Panc1 (cell line): ENCODE measurements at regions of chr4 and their contacts with region 1.

Region 1: DNA sequence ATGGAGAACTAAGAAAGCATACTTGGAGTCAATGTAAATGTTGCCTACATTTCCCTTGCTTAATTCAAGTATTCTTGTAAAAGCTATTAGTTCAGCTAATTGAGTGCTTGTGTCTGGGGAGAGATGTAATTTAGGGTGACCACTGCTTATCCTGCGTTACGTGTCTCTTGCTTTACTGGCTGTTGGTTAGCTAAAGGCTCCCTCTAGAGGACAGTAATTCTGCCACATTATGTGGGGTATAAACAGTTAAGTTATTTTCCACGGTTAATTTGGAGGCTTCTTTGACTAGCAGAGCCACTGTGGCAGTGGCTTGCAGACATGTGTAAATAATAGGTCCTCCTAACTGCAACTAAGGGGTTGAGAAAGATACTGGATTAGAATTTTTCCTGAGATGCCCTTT is 25.3 kb upstream of the NAF1 start:
- DNase-seq: no peak
- ATAC-seq: peak; percentile 70; the same call in 1 of the 2 replicates
- H3K4me3 ChIP-seq: no peak overlapping the region
- H3K27ac ChIP-seq: no peak overlapping the region
- H3K4me1 ChIP-seq: no peaks in the 10 kb centered on the region
- H3K27me3 ChIP-seq: no peaks in the 10 kb centered on the region
- CTCF ChIP-seq: peak; percentile 66

Region 2: DNA sequence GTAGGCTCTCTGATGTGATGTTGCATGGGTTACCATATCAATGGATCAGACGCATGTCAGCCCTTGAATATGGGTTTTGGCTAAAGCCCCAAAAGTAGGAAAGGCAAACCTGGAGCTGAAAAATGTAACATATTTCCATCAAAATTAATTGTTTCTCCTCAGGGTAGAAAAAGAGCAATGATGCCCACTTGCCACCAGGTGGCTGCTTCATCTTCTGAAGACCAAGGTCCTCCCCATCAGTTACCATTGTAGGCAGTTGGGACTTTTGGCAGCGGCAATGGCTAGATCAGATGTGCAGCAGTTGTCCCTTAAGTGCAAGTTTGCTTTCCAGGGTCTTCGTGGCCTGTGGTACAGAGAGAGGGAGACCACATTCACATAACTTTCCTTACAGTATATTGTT is 143.6 kb before region 1 on chr4:
- CTCF ChIA-PET with region 1: no interaction called
- POLR2A ChIA-PET with region 1: no interaction called
- in situ Hi-C with region 1: no loop called
- intact Hi-C with region 1: loop called (anchors 10 kb)
- DNase-seq: no peak
- ATAC-seq: no peak
- H3K4me3 ChIP-seq: no peak overlapping the region
- H3K27ac ChIP-seq: no peak overlapping the region
- H3K4me1 ChIP-seq: no peaks in the 10 kb centered on the region
- H3K27me3 ChIP-seq: no peaks in the 10 kb centered on the region
- CTCF ChIP-seq: peak; percentile 50

Region 3: GRCh38 chr4:163171590-163171989 is 20.4 kb before region 1 on chr4:
- CTCF ChIA-PET with region 1: no interaction called
- POLR2A ChIA-PET with region 1: no interaction called
- in situ Hi-C with region 1: no loop called
- intact Hi-C with region 1: no loop called
- DNase-seq: no peak
- ATAC-seq: no peak
- H3K4me3 ChIP-seq: no peak overlapping the region
- H3K27ac ChIP-seq: no peak overlapping the region
- H3K4me1 ChIP-seq: no peaks in the 10 kb centered on the region
- H3K27me3 ChIP-seq: no peaks in the 10 kb centered on the region
- CTCF ChIP-seq: no peak